ENCODE measurements at regions of chr15 and their contacts with region 1.

Region 1: DNA sequence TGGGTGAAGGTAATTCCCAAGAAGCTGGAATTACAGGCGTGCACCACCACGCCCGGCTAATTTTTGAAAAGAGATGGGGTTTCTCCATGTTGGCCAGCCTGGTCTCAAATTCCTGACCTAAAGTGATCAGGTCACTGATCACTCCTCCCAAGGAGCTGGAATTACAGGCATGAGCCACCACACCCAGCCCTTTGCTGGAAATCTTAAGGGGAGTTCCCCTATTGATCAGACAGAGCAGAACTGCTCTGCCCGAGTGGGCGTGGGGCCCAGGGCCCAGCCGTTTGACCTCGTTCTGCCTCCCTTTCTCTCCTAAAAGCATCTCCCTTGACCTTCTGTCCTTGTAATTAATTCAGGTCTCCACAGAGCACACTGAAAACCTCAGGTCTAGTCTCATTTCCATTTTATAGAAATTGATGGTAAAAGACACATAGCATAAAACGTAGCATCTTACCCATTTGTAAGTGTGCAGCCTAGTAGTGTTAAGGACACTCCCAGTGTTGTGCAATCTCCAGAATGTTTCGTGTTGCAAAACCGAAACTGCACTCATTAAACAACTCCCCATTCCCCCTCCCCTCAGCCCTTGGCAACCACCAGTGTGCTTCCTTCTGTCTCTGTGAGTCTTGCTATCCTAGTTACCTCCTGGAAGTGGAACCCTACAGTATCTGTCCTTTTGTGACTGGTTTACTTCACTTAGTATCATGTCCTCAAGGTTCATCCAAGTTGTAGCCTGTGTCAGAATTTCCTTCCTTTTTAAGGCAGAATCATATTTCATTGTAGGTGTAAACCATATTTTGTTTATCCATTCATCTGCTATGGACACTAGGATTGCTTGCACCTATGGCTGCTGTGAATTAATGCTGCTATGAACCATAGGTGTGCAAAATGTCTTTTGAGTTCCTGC is 89.4 kb downstream of the SLCO3A1 start:
- DNase-seq: peak in 1 of 2 donors; percentile 96
- H3K4me3 ChIP-seq: peak overlapping the region; percentile 1 to 22
- H3K27ac ChIP-seq: peak overlapping the region; percentile 72
- H3K4me1 ChIP-seq: peaks cover 93% of the 10 kb centered on the region
- H3K27me3 ChIP-seq: no peaks in the 10 kb centered on the region
- CTCF ChIP-seq: no peak
- POLR2A ChIP-seq: no peak

Region 2: DNA sequence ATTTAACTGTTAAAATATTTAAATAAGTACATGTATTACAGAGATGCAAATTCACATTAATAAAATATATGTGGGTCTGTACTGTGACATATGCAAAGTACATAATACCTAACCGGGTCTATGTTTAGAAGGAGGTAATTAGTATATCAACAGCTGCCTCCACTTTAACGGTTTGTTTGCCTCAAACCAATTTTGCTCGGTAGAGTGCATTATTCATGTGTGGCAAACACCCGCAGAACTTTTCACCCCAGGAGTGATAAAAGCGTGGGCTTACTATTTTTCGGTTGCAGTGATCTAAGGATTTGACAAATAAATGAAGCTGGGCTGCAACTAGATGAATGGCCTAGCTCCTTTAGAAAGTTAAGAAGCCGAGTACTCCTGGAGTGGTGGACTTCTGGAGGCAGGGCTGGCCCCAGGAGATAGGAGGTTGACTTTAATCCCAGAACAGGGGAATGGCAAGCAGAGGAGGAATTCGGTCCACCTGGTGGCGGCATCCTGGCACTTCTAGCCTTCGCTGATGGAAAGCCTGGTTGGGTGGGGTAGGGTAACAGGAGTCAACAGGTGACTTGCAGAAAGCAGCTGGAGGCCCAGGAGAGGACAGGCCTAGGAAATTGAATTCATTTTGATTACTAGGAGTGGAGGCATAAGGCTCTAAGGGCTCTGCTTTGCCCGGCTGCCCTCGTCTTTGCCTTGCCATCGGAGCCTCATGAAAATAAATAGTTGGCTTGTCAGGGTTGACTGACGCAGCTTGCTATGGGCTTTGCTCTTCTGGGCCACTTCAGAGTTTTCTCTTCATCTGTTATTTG is 87.0 kb before region 1 on chr15:
- intact Hi-C with region 1: loop called (anchors 5 kb)
- DNase-seq: no peak
- H3K4me3 ChIP-seq: peak overlapping the region in 1 of 2 donors; percentile 73
- H3K27ac ChIP-seq: peak overlapping the region; percentile 25
- H3K4me1 ChIP-seq: peaks cover 59% of the 10 kb centered on the region
- H3K27me3 ChIP-seq: no peaks in the 10 kb centered on the region
- CTCF ChIP-seq: peak in 1 of 3 experiments; percentile 17
- POLR2A ChIP-seq: no peak

Region 3: GRCh38 chr15:92020765-92021164 is 77.8 kb after region 1 on chr15:
- intact Hi-C with region 1: no loop called
- DNase-seq: no peak
- H3K4me3 ChIP-seq: no peak overlapping the region
- H3K27ac ChIP-seq: no peak overlapping the region
- H3K4me1 ChIP-seq: peaks cover 40% of the 10 kb centered on the region
- H3K27me3 ChIP-seq: no peaks in the 10 kb centered on the region
- CTCF ChIP-seq: no peak
- POLR2A ChIP-seq: no peak

Region 4: GRCh38 chr15:92043263-92043662 is 100.3 kb after region 1 on chr15:
- intact Hi-C with region 1: no loop called
- DNase-seq: no peak
- H3K4me3 ChIP-seq: no peak overlapping the region
- H3K27ac ChIP-seq: no peak overlapping the region
- H3K4me1 ChIP-seq: peaks cover 23% of the 10 kb centered on the region
- H3K27me3 ChIP-seq: no peaks in the 10 kb centered on the region
- CTCF ChIP-seq: no peak
- POLR2A ChIP-seq: no peak